Ascending aorta (tissue), 2 donors: ENCODE measurements at regions of chr2 and their contacts with region 1.

Region 1: DNA sequence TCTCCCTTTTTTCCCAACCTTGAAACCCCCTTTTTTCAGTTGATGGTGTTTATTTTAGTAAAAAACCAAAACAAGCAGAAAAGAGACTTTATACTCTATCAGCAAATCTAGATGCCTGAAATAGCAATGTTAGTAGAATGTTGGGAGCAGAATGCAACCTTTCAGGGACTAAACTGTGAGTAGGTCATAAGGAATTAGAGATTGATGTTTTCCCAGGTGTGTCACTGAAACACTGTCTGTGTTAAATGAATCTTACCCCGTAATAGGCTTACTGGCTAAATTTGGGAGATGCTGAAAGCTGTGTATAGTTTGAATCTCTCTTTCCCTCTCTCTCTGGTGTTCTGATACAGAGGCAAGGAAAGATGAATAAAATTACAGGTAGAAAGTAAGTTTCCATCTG is 43.8 kb downstream of the AGFG1 start:
- DNase-seq: no peak
- H3K4me3 ChIP-seq: no peak overlapping the region
- H3K27ac ChIP-seq: no peak overlapping the region
- H3K4me1 ChIP-seq: peaks cover 4 to 38% of the 10 kb centered on the region in 2 donors
- H3K27me3 ChIP-seq: no peaks in the 10 kb centered on the region
- CTCF ChIP-seq: no peak

Region 2: GRCh38 chr2:227471924-227472264 is 43.8 kb before region 1 on chr2 and contains the start of gene AGFG1:
- intact Hi-C with region 1: loop called (anchors 5 kb)
- DNase-seq: peak; percentile 40 to 92
- H3K4me3 ChIP-seq: peak within 1 kb of the TSS; percentile 95 to 97
- H3K27ac ChIP-seq: peak within 1 kb of the TSS; percentile 92 to 97
- H3K4me1 ChIP-seq: peaks cover 0 to 22% of the 10 kb centered on the region in 2 donors
- H3K27me3 ChIP-seq: no peaks in the 10 kb centered on the region
- CTCF ChIP-seq: peak; percentile 96 to 99 (median 99)
- total RNA-seq, gene AGFG1: 25.5 TPM

Region 3: GRCh38 chr2:227503433-227504406 is 12.0 kb before region 1 on chr2:
- intact Hi-C with region 1: loop called (anchors 1 kb)
- DNase-seq: peak; percentile 22 to 82
- H3K4me3 ChIP-seq: no peak overlapping the region
- H3K27ac ChIP-seq: peak overlapping the region; percentile 45 to 49
- H3K4me1 ChIP-seq: peaks cover 0 to 28% of the 10 kb centered on the region in 2 donors
- H3K27me3 ChIP-seq: no peaks in the 10 kb centered on the region
- CTCF ChIP-seq: no peak